ENCODE measurements at regions of chr16 and their contacts with region 1.

Region 1: DNA sequence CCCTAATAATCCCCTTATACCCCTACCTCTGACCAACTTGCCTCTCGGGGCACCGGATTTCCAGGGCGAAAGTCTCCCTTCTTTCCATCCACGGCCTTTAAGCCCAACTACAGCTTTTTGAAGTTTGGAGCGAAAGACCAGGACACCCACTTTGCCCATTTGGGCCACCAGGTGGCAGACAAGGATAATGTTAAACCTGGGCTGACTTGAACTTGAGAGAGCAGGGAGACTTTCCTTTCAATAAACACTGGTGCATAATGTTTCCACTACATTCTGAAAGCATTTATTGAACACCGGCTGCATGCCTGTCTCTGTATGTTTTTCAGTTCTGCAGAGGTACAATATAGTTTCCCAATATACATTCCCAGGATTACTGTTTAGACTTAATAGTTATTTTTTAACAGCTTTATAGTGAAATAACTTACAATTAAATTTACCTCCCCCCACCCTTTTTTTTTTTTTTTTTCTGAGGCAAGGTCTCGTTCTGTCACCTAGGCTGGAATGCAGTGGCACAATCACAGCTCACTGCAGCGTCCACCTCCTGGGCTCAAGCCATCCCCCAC is 6.9 kb upstream of the CES3 start:
- DNase-seq: peak; percentile 83
- H3K4me3 ChIP-seq: peak overlapping the region in 1 of 2 experiments; percentile 23; a peak in 1 of 4 replicates
- H3K27ac ChIP-seq: no peak overlapping the region
- H3K4me1 ChIP-seq: no peaks in the 10 kb centered on the region
- H3K27me3 ChIP-seq: no peaks in the 10 kb centered on the region
- CTCF ChIP-seq: peak; percentile 87
- EP300 ChIP-seq: no peak
- RAD21 ChIP-seq: peak; percentile 91

Region 2: DNA sequence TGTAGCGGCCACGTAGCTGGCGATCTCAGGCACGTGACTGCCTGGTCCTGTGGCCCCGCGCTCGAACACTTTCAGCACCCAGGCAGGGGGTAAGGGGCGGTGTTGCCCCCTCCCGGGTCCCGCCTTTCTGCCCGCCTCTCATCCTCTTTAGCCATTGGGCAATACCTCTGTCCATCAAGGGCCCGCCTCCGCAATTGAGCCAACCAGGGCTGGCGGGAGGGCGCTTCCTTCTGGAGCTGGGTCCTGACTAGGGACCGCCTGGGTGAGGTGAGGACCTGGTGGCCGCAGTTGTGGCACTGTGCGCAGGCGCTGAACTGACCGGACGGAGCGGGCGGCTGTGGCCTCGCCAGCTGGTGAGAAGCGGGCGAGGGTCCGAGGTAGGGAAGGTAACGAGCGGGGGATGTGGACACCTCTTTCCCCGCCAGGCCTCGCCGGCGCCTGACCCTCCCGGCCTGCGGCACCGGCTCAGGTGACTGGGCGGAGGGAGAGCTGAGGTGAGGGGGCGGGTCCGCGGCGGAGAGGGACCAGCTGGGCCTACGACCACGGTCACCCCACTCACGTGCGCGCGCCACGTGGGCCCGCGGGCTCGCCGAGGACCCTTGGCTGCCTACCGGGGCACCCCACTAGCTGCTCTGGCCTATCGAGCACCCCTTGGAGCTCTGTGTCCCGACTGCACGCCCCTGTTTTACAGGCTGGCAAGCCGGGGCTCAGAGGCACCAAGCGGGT is 73.7 kb before region 1 on chr16 and contains the start of gene PDP2:
- CTCF ChIA-PET with region 1: interaction called, 10 read pairs
- POLR2A ChIA-PET with region 1: no interaction called
- DNase-seq: peak; percentile 99
- H3K4me3 ChIP-seq: peak within 1 kb of the TSS; percentile 74 to 95
- H3K27ac ChIP-seq: peak within 1 kb of the TSS in 1 of 2 experiments; percentile 29; a peak in 1 of 4 replicates
- H3K4me1 ChIP-seq: peaks cover 0 to 7% of the 10 kb centered on the region in 2 experiments; a peak in 1 of 4 replicates
- H3K27me3 ChIP-seq: no peaks in the 10 kb centered on the region
- CTCF ChIP-seq: no peak
- EP300 ChIP-seq: no peak
- RAD21 ChIP-seq: no peak
- polyA plus RNA-seq, gene PDP2: 4.7 and 7.3 TPM in 2 replicates

Region 3: GRCh38 chr16:66940226-66940625 is 14.0 kb before region 1 on chr16:
- CTCF ChIA-PET with region 1: interaction called, 22 read pairs
- POLR2A ChIA-PET with region 1: no interaction called
- DNase-seq: no peak
- H3K4me3 ChIP-seq: no peak overlapping the region
- H3K27ac ChIP-seq: no peak overlapping the region
- H3K4me1 ChIP-seq: peaks cover 0 to 11% of the 10 kb centered on the region in 2 experiments; a peak in 1 of 4 replicates
- H3K27me3 ChIP-seq: no peaks in the 10 kb centered on the region
- CTCF ChIP-seq: no peak
- EP300 ChIP-seq: no peak
- RAD21 ChIP-seq: no peak

Region 4: DNA sequence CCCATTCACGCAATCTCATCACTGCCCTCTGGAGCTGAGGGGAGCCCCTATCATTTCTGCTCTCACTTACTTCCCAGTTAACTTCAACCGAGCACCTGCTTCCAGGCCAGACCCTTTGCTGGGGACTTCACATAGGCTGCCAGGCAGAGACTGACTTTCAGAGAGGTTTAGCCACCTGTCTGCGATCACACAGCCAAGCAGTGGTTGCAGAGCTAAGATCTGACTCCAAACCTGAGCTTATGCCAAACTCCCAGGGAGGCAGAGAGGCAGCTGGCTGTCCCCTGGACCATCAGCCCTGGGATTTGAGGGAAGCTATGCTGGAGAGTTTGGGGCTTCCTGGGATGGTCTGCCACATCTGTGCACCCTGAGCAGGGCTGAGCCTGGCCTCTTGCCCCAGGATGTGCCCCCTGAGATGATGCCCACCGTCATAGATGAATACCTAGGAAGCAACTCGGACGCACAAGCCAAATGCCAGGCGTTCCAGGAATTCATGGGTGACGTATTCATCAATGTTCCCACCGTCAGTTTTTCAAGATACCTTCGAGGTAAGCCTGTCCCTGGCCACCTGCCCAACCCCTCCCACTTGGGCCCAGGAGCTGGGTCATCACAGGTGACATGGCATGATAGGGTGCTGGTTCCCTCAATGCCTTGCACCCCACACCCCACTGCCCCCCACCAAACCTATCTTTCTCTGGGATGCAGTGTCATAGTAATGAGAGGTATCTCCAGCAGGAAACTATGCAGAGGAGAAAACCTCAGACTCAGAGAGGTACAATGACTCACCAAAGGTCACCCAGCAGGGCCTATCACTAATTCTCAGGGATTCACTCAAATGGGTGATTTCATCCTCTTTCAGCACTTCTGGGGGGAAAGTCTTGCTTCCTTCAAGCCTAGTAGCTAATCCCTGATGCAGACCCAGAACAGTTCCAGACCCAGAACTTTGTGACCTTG is 16.9 kb after region 1 on chr16:
- CTCF ChIA-PET with region 1: interaction called, 71 read pairs
- POLR2A ChIA-PET with region 1: no interaction called
- DNase-seq: no peak
- H3K4me3 ChIP-seq: no peak overlapping the region
- H3K27ac ChIP-seq: no peak overlapping the region
- H3K4me1 ChIP-seq: no peaks in the 10 kb centered on the region
- H3K27me3 ChIP-seq: no peaks in the 10 kb centered on the region
- CTCF ChIP-seq: no peak
- EP300 ChIP-seq: no peak
- RAD21 ChIP-seq: no peak

Region 5: DNA sequence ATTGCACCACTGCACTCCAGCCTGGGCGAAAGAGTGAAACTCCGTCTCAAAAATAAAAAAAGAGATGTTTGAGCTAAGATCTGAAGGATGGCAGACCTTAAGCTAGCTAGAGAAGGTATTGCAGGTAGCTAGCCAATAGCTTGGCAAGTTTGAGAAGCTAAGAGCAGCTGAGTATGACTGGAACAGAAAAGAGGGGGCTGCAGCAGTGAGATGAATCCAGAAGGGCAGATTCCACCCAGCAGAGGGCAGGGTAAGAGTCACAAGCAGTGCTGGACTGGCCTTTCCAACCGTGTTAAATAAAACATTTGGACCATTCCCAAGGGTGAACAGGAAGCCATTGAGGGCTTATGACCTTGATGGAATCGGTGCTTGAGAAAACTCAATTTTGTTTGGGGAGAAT is 149.9 kb after region 1 on chr16:
- CTCF ChIA-PET with region 1: interaction called, 15 read pairs
- POLR2A ChIA-PET with region 1: no interaction called
- DNase-seq: peak; percentile 37
- H3K4me3 ChIP-seq: no peak overlapping the region
- H3K27ac ChIP-seq: no peak overlapping the region
- H3K4me1 ChIP-seq: peaks cover 0 to 8% of the 10 kb centered on the region in 2 experiments; a peak in 1 of 4 replicates
- H3K27me3 ChIP-seq: no peaks in the 10 kb centered on the region
- CTCF ChIP-seq: peak; percentile 60
- EP300 ChIP-seq: no peak
- RAD21 ChIP-seq: peak; percentile 11; the same call in 1 of the 2 replicates

Region 6: DNA sequence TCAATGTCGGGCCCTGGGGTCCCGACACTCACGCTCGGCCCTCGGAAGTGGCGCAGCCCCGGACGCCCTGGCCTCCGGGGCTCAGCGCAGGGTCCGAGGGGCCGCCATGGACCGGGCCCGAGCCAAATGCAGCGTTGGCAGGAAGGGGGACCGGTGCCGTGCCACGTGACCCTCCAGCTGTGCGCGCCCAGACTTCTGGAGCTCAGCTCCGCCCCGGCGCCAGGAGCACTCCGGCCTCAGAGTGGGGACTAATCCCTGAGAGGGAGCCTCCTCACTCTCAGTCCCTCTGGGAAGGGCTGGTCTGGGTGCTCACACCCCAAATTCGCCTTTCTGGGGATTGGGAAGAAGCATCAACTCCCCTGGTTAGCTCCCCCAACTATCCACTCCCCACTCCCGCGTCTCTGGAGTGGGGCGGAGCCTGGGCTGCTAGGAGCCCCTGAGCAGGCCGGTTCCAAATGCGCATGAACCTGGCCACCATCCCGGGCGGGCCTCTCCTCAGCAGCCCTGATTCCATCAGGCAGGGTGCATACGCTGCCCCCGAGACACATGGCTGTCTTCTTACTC is 196.7 kb after region 1 on chr16 and contains the start of gene B3GNT9:
- CTCF ChIA-PET with region 1: interaction called, 82 read pairs
- POLR2A ChIA-PET with region 1: no interaction called
- DNase-seq: peak; percentile 92
- H3K4me3 ChIP-seq: peak within 1 kb of the TSS; percentile 54 to 66; a peak in 3 of 4 replicates
- H3K27ac ChIP-seq: peak within 1 kb of the TSS; percentile 26 to 90
- H3K4me1 ChIP-seq: peaks cover 0 to 11% of the 10 kb centered on the region in 2 experiments; a peak in 1 of 4 replicates
- H3K27me3 ChIP-seq: no peaks in the 10 kb centered on the region
- CTCF ChIP-seq: no peak
- EP300 ChIP-seq: no peak
- RAD21 ChIP-seq: no peak
- polyA plus RNA-seq, gene B3GNT9: 9.8 and 9.9 TPM in 2 replicates

Region 7: DNA sequence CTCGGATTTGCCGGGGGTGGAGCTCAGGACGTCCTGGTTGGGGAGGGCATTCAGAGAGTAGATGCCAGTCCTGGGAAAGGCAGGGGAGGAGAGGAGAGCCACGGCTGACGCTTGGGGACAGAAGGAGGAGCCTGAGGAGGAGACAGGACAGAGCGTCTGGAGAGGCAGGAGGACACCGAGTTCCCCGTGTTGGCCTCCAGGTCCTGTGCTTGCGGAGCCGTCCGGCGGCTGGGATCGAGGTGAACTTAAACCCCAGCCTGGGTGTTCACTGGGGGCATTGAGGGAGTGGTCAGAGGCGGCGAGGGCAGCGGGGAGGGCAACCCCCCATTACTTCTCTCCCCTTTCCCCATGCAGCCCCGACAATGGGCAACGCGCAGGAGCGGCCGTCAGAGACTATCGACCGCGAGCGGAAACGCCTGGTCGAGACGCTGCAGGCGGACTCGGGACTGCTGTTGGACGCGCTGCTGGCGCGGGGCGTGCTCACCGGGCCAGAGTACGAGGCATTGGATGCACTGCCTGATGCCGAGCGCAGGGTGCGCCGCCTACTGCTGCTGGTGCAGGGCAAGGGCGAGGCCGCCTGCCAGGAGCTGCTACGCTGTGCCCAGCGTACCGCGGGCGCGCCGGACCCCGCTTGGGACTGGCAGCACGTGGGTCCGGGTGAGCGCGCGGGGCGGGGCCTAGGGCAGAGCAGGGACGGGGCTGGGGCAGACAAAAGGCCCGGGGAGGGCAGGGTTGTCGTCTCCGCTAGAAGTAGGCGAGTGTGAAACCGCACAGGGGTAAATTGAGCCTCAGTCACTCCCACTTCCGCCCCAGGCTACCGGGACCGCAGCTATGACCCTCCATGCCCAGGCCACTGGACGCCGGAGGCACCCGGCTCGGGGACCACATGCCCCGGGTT is 219.9 kb after region 1 on chr16:
- CTCF ChIA-PET with region 1: interaction called, 11 read pairs
- POLR2A ChIA-PET with region 1: no interaction called
- DNase-seq: peak; percentile 90
- H3K4me3 ChIP-seq: peak overlapping the region; percentile 45 to 60
- H3K27ac ChIP-seq: peak overlapping the region; percentile 67 to 86
- H3K4me1 ChIP-seq: peaks cover 39 to 60% of the 10 kb centered on the region in 2 experiments; a peak in 3 of 4 replicates
- H3K27me3 ChIP-seq: no peaks in the 10 kb centered on the region
- CTCF ChIP-seq: no peak; the same call in 1 of the 2 replicates
- EP300 ChIP-seq: no peak
- RAD21 ChIP-seq: peak; percentile 16; the same call in 1 of the 2 replicates